MCF 10A (cell line): ENCODE measurements at regions of chr17 and their contacts with region 1.

Region 1: DNA sequence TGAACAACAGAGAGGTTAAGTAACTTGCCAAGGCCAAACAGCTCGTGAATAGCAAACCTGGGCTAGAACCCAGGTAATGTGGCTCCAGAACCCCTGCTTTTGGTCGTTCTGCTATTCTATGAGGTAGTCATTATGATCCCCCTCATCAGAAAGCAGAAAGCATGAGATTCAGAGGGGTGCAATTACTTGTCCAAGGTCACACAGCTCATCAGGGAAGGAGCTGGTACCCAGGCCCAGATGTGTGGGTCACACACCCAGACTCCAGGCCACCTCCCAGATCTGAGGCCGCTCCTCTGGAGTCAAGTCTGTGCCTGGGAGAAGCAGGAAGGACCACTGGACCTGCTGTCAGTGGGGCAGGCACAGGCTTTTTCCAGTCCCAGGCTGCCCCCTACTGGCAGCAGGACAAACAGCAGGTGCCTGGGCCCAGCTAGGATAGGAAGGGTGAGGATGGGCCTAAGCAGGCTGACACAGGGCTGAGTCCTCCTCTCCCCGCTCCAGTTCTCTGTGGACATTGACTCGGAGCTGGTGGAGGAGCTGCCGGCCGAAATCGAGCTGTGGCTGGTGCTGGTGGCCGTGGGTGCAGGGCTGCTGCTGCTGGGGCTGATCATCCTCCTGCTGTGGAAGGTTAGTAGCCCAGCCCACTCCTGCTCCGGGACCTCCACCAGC is 7.8 kb upstream of the PDK2 start:
- DNase-seq: peak; percentile 69
- H3K4me3 Mint-ChIP-seq: no peak overlapping the region
- H3K27ac Mint-ChIP-seq: peak overlapping the region; percentile 27
- H3K4me1 Mint-ChIP-seq: no peaks in the 10 kb centered on the region
- H3K27me3 Mint-ChIP-seq: no peaks in the 10 kb centered on the region
- CTCF ChIP-seq: peak; percentile 85

Region 2: DNA sequence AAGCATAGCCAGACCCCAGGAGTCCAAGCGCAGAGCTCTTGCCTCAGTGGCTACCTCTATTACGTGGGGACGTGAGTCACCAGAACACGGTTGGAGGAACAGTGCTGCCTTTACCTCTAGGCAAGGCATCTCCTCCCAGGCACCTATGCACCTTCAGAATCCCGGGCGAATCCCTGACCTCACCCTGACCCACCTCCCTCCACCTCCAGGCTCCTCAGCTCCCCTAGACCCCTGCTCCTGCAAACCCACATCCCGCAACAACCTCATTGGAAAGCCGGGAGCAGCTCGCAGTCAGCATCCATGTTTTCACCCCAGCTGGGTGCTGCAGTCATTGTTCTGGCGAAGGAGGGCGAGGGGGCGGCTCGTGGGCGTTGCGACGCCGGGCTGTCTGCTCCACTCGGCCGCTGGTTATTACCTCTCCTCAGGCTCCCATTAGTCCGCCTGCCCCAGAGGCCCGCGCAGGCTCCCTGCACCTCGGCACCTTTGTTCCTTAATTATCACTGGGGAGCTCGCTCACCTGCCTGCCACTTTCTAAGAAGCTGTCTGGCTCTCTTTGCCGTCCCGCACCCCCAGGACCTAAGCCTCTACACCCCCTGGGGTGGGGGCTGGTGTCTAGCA is 143.0 kb before region 1 on chr17:
- CTCF ChIA-PET with region 1: no interaction called
- POLR2A ChIA-PET with region 1: no interaction called
- intact Hi-C with region 1: no loop called
- DNase-seq: no peak
- H3K4me3 Mint-ChIP-seq: no peak overlapping the region
- H3K27ac Mint-ChIP-seq: no peak overlapping the region
- H3K4me1 Mint-ChIP-seq: no peaks in the 10 kb centered on the region
- H3K27me3 Mint-ChIP-seq: peaks cover 83% of the 10 kb centered on the region
- CTCF ChIP-seq: no peak

Region 3: DNA sequence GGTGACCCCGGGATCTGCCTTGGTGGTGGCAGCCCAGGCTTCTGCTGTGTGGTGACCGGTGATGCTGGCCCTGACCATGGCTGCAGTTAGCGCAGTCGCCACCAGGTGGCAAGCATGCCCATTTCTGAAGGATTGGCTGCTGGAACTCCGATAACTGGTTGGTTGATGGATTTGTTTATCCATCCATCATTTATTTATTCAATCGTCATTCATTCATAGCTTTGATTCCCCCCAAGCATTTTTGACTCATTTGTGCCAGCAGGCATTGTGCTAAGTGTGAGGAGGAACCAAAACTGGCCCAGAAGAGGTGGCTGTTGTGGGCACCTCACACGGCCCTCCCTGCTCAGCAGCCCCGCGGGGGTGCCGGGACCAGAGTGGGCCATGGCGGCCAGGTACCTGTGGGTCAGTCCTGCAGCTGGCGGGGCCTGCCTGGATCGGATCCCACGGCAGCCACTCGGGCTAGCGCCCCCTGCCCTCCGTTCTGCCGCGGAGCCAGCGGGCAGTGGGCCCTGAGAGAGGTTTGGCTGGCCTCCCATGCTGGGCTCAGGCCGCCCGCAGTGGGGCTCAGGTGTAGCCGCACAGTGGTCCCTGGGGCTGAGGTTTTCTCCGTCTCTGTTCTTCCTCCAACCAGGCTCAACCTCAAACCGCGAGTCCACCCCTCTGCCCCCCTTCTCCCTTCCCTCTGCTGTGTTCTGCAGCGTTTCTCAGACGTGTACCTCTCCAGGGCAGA is 60.3 kb before region 1 on chr17:
- CTCF ChIA-PET with region 1: interaction called, 56 read pairs
- POLR2A ChIA-PET with region 1: interaction called, 30 read pairs
- intact Hi-C with region 1: loop called (anchors 1 kb)
- DNase-seq: peak; percentile 89
- H3K4me3 Mint-ChIP-seq: peak overlapping the region; percentile 82
- H3K27ac Mint-ChIP-seq: peak overlapping the region; percentile 84
- H3K4me1 Mint-ChIP-seq: peaks cover 22% of the 10 kb centered on the region
- H3K27me3 Mint-ChIP-seq: no peaks in the 10 kb centered on the region
- CTCF ChIP-seq: peak; percentile 91

Region 4: DNA sequence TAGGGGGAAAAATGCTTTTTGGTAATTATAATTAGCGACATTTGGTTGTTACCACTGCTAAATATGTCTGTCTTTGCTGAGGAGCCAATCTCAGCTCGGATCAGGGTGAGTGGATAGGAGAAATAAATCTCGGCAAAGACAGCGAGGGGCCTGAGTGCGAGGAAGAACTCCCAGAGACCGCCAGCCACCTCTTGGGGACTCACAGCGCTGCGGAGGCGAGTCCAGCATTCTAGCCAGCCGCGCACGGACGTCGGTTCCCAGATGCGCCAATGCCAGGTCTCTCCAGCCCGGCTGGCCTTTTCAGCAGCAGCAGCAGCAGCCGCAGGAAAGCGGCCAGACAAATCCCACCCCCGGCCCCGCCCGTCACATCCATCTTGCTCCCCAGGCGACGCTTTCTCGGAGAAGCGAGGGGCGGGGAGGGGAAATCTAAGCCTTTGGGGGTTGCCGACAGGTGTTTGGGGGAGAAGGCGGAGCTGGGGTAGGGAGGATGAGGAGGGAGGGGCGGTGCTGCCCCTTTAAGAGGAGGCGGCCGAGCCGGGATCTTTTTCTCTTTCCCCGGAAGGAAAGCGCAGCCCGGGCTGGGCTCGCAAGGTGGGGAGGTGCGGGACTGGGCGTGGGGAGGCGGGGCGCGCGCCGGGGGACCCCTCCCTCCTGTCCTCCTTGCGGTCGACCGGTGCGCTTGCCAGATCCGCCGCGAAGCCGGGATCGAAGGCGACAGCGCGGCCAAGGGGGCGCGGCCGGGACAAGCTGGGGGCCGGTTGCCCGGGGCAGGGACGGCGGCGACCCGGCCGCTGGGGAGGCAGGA is 31.8 kb before region 1 on chr17 and contains the start of gene ITGA3:
- CTCF ChIA-PET with region 1: interaction called, 79 read pairs
- POLR2A ChIA-PET with region 1: interaction called, 77 read pairs
- intact Hi-C with region 1: no loop called
- DNase-seq: peak; percentile 98
- H3K4me3 Mint-ChIP-seq: peak within 1 kb of the TSS; percentile 80
- H3K27ac Mint-ChIP-seq: peak within 1 kb of the TSS; percentile 95
- H3K4me1 Mint-ChIP-seq: peaks cover 64% of the 10 kb centered on the region
- H3K27me3 Mint-ChIP-seq: no peaks in the 10 kb centered on the region
- CTCF ChIP-seq: no peak
- total RNA-seq, gene ITGA3: 588 and 717 TPM in 2 replicates

Region 5: GRCh38 chr17:50072925-50073324 is 14.5 kb before region 1 on chr17:
- CTCF ChIA-PET with region 1: interaction called, 79 read pairs
- POLR2A ChIA-PET with region 1: interaction called, 7 read pairs
- intact Hi-C with region 1: no loop called
- DNase-seq: no peak
- H3K4me3 Mint-ChIP-seq: no peak overlapping the region
- H3K27ac Mint-ChIP-seq: no peak overlapping the region
- H3K4me1 Mint-ChIP-seq: no peaks in the 10 kb centered on the region
- H3K27me3 Mint-ChIP-seq: no peaks in the 10 kb centered on the region
- CTCF ChIP-seq: no peak

Region 6: GRCh38 chr17:50234581-50234980 is 147.2 kb after region 1 on chr17:
- CTCF ChIA-PET with region 1: no interaction called
- POLR2A ChIA-PET with region 1: no interaction called
- intact Hi-C with region 1: no loop called
- DNase-seq: peak; percentile 29
- H3K4me3 Mint-ChIP-seq: no peak overlapping the region
- H3K27ac Mint-ChIP-seq: no peak overlapping the region
- H3K4me1 Mint-ChIP-seq: no peaks in the 10 kb centered on the region
- H3K27me3 Mint-ChIP-seq: peaks cover 16% of the 10 kb centered on the region
- CTCF ChIP-seq: no peak

Region 7: DNA sequence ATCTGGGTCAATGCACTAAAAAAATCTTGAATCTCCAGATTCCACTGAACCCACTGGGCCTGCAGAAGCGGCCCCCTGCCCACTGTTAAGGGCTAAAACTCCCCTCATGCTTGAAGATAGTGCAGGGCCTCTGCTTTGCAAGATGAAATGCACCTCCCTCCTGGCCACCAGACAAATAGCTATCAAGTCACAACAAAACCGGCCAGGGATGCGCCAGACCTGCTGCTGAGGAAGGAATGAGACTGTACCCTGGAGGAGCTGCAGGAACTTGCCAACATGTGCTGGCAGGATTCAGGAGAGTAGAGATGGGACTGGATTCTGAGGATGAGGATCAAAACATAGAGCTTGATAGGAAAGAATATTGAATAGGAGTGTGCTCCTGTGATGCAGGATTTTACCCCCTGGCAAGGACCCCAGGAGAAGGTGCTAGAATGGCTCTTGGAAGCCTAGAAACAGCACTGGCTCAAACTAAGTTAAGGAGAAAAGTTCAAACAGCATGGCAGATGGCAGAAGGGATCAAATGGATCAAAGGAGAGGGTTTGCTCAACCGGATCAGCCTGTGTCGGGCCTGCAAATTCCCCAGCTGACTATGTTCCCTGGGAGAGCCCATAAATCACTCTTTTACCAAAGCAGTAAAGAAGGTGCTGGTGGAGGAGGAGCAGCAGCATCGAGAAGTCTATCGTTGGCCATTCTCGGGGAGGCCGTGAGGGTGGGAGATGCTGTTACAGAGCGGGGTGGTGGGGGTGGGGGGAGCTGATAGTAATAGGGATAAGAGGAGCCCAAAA is 231.3 kb after region 1 on chr17:
- CTCF ChIA-PET with region 1: no interaction called
- POLR2A ChIA-PET with region 1: no interaction called
- intact Hi-C with region 1: no loop called
- DNase-seq: no peak
- H3K4me3 Mint-ChIP-seq: no peak overlapping the region
- H3K27ac Mint-ChIP-seq: no peak overlapping the region
- H3K4me1 Mint-ChIP-seq: no peaks in the 10 kb centered on the region
- H3K27me3 Mint-ChIP-seq: no peaks in the 10 kb centered on the region
- CTCF ChIP-seq: no peak